Activated CD4-positive, alpha-beta T cell treated with anti-CD3 and anti-CD28 coated beads for 36 hours (primary cell): ENCODE measurements at regions of chr5 and their contacts with region 1.

Region 1: GRCh38 chr5:40652441-40653220 is 27.1 kb upstream of the PTGER4 start:
- DNase-seq: peak; percentile 49
- ATAC-seq: peak; percentile 33
- H3K4me3 Mint-ChIP-seq: peak overlapping the region; percentile 71
- H3K27ac Mint-ChIP-seq: peak overlapping the region; percentile 91
- H3K4me1 Mint-ChIP-seq: peaks cover 63% of the 10 kb centered on the region
- H3K27me3 Mint-ChIP-seq: no peaks in the 10 kb centered on the region

Region 2: GRCh38 chr5:39080597-39081204 is 1571.9 kb before region 1 on chr5:
- CTCF ChIA-PET with region 1: no interaction called
- POLR2A ChIA-PET with region 1: no interaction called
- intact Hi-C with region 1: loop called in 1 of 2 experiments (anchors 5 kb)
- DNase-seq: peak; percentile 54
- ATAC-seq: no peak
- H3K4me3 Mint-ChIP-seq: no peak overlapping the region
- H3K27ac Mint-ChIP-seq: no peak overlapping the region
- H3K4me1 Mint-ChIP-seq: peaks cover 42% of the 10 kb centered on the region
- H3K27me3 Mint-ChIP-seq: peaks cover 11% of the 10 kb centered on the region

Region 3: GRCh38 chr5:40578501-40579451 is 73.9 kb before region 1 on chr5:
- CTCF ChIA-PET with region 1: no interaction called
- POLR2A ChIA-PET with region 1: no interaction called
- intact Hi-C with region 1: loop called in 1 of 2 experiments (anchors 2 kb)
- DNase-seq: peak; percentile 84
- ATAC-seq: peak; percentile 95
- H3K4me3 Mint-ChIP-seq: peak overlapping the region; percentile 49
- H3K27ac Mint-ChIP-seq: peak overlapping the region; percentile 72
- H3K4me1 Mint-ChIP-seq: peaks cover 44% of the 10 kb centered on the region
- H3K27me3 Mint-ChIP-seq: no peaks in the 10 kb centered on the region

Region 4: GRCh38 chr5:40605295-40605958 is 47.2 kb before region 1 on chr5:
- CTCF ChIA-PET with region 1: no interaction called
- POLR2A ChIA-PET with region 1: no interaction called
- intact Hi-C with region 1: no loop called
- DNase-seq: no peak
- ATAC-seq: no peak
- H3K4me3 Mint-ChIP-seq: peak overlapping the region; percentile 36
- H3K27ac Mint-ChIP-seq: peak overlapping the region; percentile 52
- H3K4me1 Mint-ChIP-seq: peaks cover 40% of the 10 kb centered on the region
- H3K27me3 Mint-ChIP-seq: no peaks in the 10 kb centered on the region

Region 5: GRCh38 chr5:40841068-40841805 is 188.6 kb after region 1 on chr5 and contains the start of gene CARD6:
- CTCF ChIA-PET with region 1: no interaction called
- POLR2A ChIA-PET with region 1: no interaction called
- intact Hi-C with region 1: no loop called
- DNase-seq: no peak
- ATAC-seq: peak; percentile 49
- H3K4me3 Mint-ChIP-seq: peak within 1 kb of the TSS; percentile 81
- H3K27ac Mint-ChIP-seq: peak within 1 kb of the TSS; percentile 95
- H3K4me1 Mint-ChIP-seq: peaks cover 19% of the 10 kb centered on the region
- H3K27me3 Mint-ChIP-seq: peaks cover 3% of the 10 kb centered on the region
- total RNA-seq, gene CARD6: 1.5 to 1.7 TPM